Cardiac septum (tissue), 1 donor: ENCODE measurements at regions of chr6 and their contacts with region 1.

Region 1: GRCh38 chr6:10747251-10747972 is at the start of gene TMEM14B:
- DNase-seq: peak; percentile 100
- total RNA-seq, gene TMEM14B: 92.4 TPM

Region 2: GRCh38 chr6:10722820-10723566 is 24.4 kb before region 1 on chr6 and contains the start of gene TMEM14C:
- intact Hi-C with region 1: loop called (anchors 1 kb)
- DNase-seq: peak; percentile 99
- total RNA-seq, gene TMEM14C: 112 TPM